ENCODE measurements at regions of chr1 and their contacts with region 1.

Region 1: GRCh38 chr1:200558866-200559459 is 61.6 kb downstream of the KIF14 start:
- DNase-seq: peak in 2 of 4 experiments; percentile 28 to 57
- ATAC-seq: peak; percentile 89
- H3K4me3 ChIP-seq: no peak overlapping the region
- H3K27ac ChIP-seq: no peak overlapping the region
- H3K4me1 ChIP-seq: no peaks in the 10 kb centered on the region
- H3K27me3 ChIP-seq: no peaks in the 10 kb centered on the region
- CTCF ChIP-seq: peak; percentile 47 to 77 (median 62); a peak in 5 of 6 replicates
- EP300 ChIP-seq: no peak
- POLR2A ChIP-seq: no peak
- RAD21 ChIP-seq: peak; percentile 66 to 77

Region 2: DNA sequence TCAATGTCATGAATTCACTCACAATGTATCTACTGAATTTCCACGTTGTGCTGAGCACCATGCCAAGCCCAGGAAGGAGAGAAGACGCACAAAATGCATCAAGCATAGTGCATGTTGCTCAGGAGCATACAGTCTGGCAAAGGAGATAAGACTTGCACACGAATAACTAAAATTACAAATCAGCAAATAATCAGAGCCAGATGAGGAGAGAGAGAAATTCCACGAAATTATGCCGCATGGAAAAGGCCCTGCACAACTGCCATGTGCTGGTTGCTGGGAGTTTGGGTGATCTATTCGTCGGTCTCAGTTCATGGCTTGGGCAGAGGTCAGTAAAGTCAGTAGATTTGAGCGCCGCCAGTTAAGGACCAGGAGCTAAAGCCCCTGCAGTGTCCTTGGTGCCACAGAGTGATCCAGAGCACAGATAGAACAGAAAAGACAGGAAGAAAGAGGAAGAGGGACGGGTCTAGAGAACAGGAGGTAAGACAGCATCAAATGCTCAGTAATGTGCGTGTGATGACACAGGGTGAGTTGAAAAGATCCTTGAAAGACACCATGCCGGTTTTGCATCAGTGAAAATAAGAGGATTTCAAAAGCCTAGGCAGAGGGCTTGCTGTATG is 94.1 kb before region 1 on chr1:
- CTCF ChIA-PET with region 1: no interaction called
- POLR2A ChIA-PET with region 1: no interaction called
- in situ Hi-C with region 1: no loop called
- intact Hi-C with region 1: no loop called
- DNase-seq: no peak
- ATAC-seq: no peak; the same call in 2 of the 3 replicates
- H3K4me3 ChIP-seq: no peak overlapping the region
- H3K27ac ChIP-seq: no peak overlapping the region
- H3K4me1 ChIP-seq: no peaks in the 10 kb centered on the region
- H3K27me3 ChIP-seq: peaks cover 12 to 20% of the 10 kb centered on the region in 2 experiments; a peak in 3 of 5 replicates
- CTCF ChIP-seq: no peak
- EP300 ChIP-seq: no peak
- POLR2A ChIP-seq: no peak
- RAD21 ChIP-seq: no peak

Region 3: GRCh38 chr1:200590001-200590400 is 31.0 kb after region 1 on chr1:
- CTCF ChIA-PET with region 1: no interaction called
- POLR2A ChIA-PET with region 1: no interaction called
- in situ Hi-C with region 1: no loop called
- intact Hi-C with region 1: no loop called
- DNase-seq: no peak
- ATAC-seq: no peak
- H3K4me3 ChIP-seq: no peak overlapping the region
- H3K27ac ChIP-seq: no peak overlapping the region
- H3K4me1 ChIP-seq: no peaks in the 10 kb centered on the region
- H3K27me3 ChIP-seq: no peaks in the 10 kb centered on the region
- CTCF ChIP-seq: no peak
- EP300 ChIP-seq: no peak
- POLR2A ChIP-seq: no peak
- RAD21 ChIP-seq: no peak

Region 4: GRCh38 chr1:200802865-200803512 is 244.0 kb after region 1 on chr1:
- CTCF ChIA-PET with region 1: interaction called, 28 read pairs
- POLR2A ChIA-PET with region 1: no interaction called
- in situ Hi-C with region 1: no loop called
- intact Hi-C with region 1: loop called (anchors 1 kb)
- DNase-seq: peak; percentile 71 to 88 (median 74)
- ATAC-seq: peak; percentile 99
- H3K4me3 ChIP-seq: no peak overlapping the region
- H3K27ac ChIP-seq: no peak overlapping the region
- H3K4me1 ChIP-seq: no peaks in the 10 kb centered on the region
- H3K27me3 ChIP-seq: no peaks in the 10 kb centered on the region
- CTCF ChIP-seq: peak; percentile 94 to 96 (median 95)
- EP300 ChIP-seq: no peak
- POLR2A ChIP-seq: no peak
- RAD21 ChIP-seq: peak; percentile 98 to 99

Region 5: GRCh38 chr1:200837931-200838571 is 279.1 kb after region 1 on chr1:
- CTCF ChIA-PET with region 1: interaction called, 17 read pairs
- POLR2A ChIA-PET with region 1: no interaction called
- in situ Hi-C with region 1: no loop called
- intact Hi-C with region 1: no loop called
- DNase-seq: no peak
- ATAC-seq: no peak
- H3K4me3 ChIP-seq: no peak overlapping the region
- H3K27ac ChIP-seq: no peak overlapping the region
- H3K4me1 ChIP-seq: no peaks in the 10 kb centered on the region
- H3K27me3 ChIP-seq: no peaks in the 10 kb centered on the region
- CTCF ChIP-seq: peak in 2 of 3 experiments; percentile 8 to 50; a peak in 2 of 6 replicates
- EP300 ChIP-seq: no peak
- POLR2A ChIP-seq: no peak
- RAD21 ChIP-seq: peak; percentile 44 to 59

Region 6: GRCh38 chr1:201042779-201043461 is 484.0 kb after region 1 on chr1:
- CTCF ChIA-PET with region 1: interaction called, 10 read pairs
- POLR2A ChIA-PET with region 1: no interaction called
- in situ Hi-C with region 1: no loop called
- intact Hi-C with region 1: loop called (anchors 10 kb)
- DNase-seq: peak; percentile 73 to 78 (median 76)
- ATAC-seq: peak; percentile 92
- H3K4me3 ChIP-seq: no peak overlapping the region
- H3K27ac ChIP-seq: no peak overlapping the region
- H3K4me1 ChIP-seq: no peaks in the 10 kb centered on the region
- H3K27me3 ChIP-seq: peaks cover 0 to 15% of the 10 kb centered on the region in 2 experiments; a peak in 3 of 5 replicates
- CTCF ChIP-seq: peak; percentile 91 to 97 (median 95)
- EP300 ChIP-seq: no peak
- POLR2A ChIP-seq: no peak
- RAD21 ChIP-seq: peak; percentile 98 to 99

Measured in K562 (cell line).